BJ (cell line): ENCODE measurements at regions of chr10 and their contacts with region 1.

Region 1: DNA sequence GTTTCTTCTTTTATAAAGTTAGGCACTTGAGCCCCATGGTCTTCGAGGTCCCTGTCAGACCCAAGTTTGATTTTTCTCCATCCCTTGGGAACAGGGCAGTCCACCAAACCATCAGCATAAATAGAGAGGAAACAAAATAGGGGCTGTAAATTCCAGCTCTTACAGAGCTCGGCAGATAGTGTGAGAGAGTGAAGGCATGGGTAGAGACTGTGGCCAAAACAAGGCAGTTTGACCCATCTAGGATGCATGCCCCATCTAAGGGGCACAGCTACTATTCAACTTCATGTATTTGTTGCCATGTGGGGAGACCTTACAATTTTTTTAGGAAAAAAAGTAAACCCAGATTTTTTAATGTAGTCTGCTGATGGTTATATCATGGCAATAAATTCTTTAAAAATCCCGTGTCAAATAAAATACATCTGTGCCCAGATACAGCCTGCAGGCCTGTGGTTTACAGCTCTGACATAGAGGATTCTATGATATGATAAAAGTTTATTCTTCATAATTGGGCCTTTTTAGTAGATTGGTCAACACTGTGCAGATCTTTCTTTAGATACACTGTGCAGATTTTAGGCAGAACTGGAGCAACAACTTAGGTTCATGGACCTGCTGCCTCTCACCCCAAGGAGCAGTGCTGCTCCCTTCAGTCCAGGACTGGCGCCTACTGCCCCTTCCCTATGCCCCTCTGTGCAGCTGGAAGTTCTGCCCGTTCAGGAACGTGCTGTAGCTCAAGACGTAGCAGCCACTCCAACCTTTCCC is 5.3 kb downstream of the PPP1R3C start:
- DNase-seq: no peak
- H3K4me3 ChIP-seq: no peak overlapping the region
- H3K27me3 ChIP-seq: no peaks in the 10 kb centered on the region
- CTCF ChIP-seq: peak; percentile 21; the same call in 1 of the 2 replicates

Region 2: GRCh38 chr10:91313796-91314485 is 313.6 kb before region 1 on chr10:
- CTCF ChIA-PET with region 1: no interaction called
- POLR2A ChIA-PET with region 1: no interaction called
- DNase-seq: no peak
- H3K4me3 ChIP-seq: no peak overlapping the region
- H3K27me3 ChIP-seq: peaks cover 4% of the 10 kb centered on the region
- CTCF ChIP-seq: no peak

Region 3: GRCh38 chr10:91493313-91493712 is 134.2 kb before region 1 on chr10:
- CTCF ChIA-PET with region 1: interaction called, 116 read pairs
- POLR2A ChIA-PET with region 1: no interaction called
- DNase-seq: no peak
- H3K4me3 ChIP-seq: no peak overlapping the region
- H3K27me3 ChIP-seq: no peaks in the 10 kb centered on the region
- CTCF ChIP-seq: peak; percentile 37